ENCODE measurements at regions of chr2 and their contacts with region 1.

Region 1: GRCh38 chr2:27322766-27323595 is at the start of gene MPV17:
- DNase-seq: peak; percentile 82 to 89 (median 82)
- H3K4me3 ChIP-seq: peak within 1 kb of the TSS; percentile 81 to 97
- H3K4me3 Mint-ChIP-seq: peak within 1 kb of the TSS; percentile 95 to 100 (median 96)
- H3K27ac ChIP-seq: peak within 1 kb of the TSS; percentile 95
- H3K27ac Mint-ChIP-seq: peak within 1 kb of the TSS; percentile 96 to 100 (median 98)
- H3K4me1 ChIP-seq: peaks cover 25% of the 10 kb centered on the region
- H3K4me1 Mint-ChIP-seq: peaks cover 12 to 28% (median 18%) of the 10 kb centered on the region in 4 donors
- H3K27me3 ChIP-seq: no peaks in the 10 kb centered on the region
- H3K27me3 Mint-ChIP-seq: no peaks in the 10 kb centered on the region
- total RNA-seq, gene MPV17: 89.3 to 93.3 TPM

Region 2: DNA sequence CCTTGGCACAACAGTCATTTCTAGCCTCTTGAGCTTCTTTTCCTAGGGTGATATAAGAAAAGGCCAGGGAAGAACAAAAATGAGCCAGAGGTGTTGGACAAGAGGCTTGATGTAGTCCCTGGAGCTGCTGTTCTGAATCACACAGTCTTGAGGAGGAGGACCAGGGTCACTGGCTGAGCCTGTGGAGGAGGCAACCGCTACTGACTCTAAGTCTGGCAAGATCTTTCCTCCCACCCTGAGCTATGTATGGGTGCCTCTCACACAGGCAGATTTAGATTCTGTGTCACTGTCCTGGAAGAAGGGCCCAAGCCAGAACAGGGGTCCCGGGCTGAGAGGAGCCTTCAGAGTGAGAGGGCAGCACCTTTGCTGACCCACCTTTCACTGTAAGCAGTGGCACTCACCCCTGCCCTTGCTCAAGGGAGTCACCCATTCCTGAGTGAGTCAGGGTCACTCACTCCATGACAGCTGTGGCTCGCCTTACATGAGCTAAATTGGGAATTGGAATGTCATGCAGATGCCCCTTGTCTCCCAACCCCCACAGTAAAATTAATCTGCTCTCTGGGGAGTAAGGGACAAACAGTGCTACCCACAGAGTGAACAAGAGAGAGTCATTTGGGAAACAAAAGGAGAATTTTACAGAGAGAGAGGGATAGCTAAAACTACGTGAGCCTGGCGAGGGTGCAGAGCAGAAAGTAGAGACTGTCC is 41.0 kb before region 1 on chr2 and contains the start of gene TRIM54:
- CTCF ChIA-PET with region 1: no interaction called
- POLR2A ChIA-PET with region 1: no interaction called
- intact Hi-C with region 1: no loop called
- DNase-seq: no peak
- H3K4me3 ChIP-seq: no peak within 1 kb of the TSS
- H3K4me3 Mint-ChIP-seq: no peak within 1 kb of the TSS
- H3K27ac ChIP-seq: no peak within 1 kb of the TSS
- H3K27ac Mint-ChIP-seq: peak within 1 kb of the TSS in 1 of 7 donors; percentile 62
- H3K4me1 ChIP-seq: no peaks in the 10 kb centered on the region
- H3K4me1 Mint-ChIP-seq: peaks cover 0 to 4% (median 1%) of the 10 kb centered on the region in 4 donors
- H3K27me3 ChIP-seq: peaks cover 6% of the 10 kb centered on the region
- H3K27me3 Mint-ChIP-seq: peaks cover 11 to 25% of the 10 kb centered on the region in 2 donors
- total RNA-seq, gene TRIM54: 0.17 TPM in 1 of 2 experiments, not detected in the other

Region 3: GRCh38 chr2:27335311-27335710 is 12.3 kb after region 1 on chr2:
- CTCF ChIA-PET with region 1: no interaction called
- POLR2A ChIA-PET with region 1: interaction called, 14 read pairs
- intact Hi-C with region 1: no loop called
- DNase-seq: no peak
- H3K4me3 ChIP-seq: no peak overlapping the region
- H3K4me3 Mint-ChIP-seq: no peak overlapping the region
- H3K27ac ChIP-seq: no peak overlapping the region
- H3K27ac Mint-ChIP-seq: peak overlapping the region in 3 of 7 donors; percentile 33 to 56 (median 36)
- H3K4me1 ChIP-seq: no peaks in the 10 kb centered on the region
- H3K4me1 Mint-ChIP-seq: no peaks in the 10 kb centered on the region
- H3K27me3 ChIP-seq: no peaks in the 10 kb centered on the region
- H3K27me3 Mint-ChIP-seq: no peaks in the 10 kb centered on the region

Region 4: GRCh38 chr2:27356382-27357181 is 33.6 kb after region 1 on chr2 and contains the start of gene GTF3C2:
- CTCF ChIA-PET with region 1: no interaction called
- POLR2A ChIA-PET with region 1: interaction called, 19 read pairs
- intact Hi-C with region 1: loop called (anchors 1 kb)
- DNase-seq: peak; percentile 93 to 97 (median 93)
- H3K4me3 ChIP-seq: peak within 1 kb of the TSS; percentile 49 to 75
- H3K4me3 Mint-ChIP-seq: peak within 1 kb of the TSS; percentile 96 to 100 (median 98)
- H3K27ac ChIP-seq: peak within 1 kb of the TSS; percentile 85
- H3K27ac Mint-ChIP-seq: peak within 1 kb of the TSS; percentile 96 to 100 (median 99)
- H3K4me1 ChIP-seq: peaks cover 51% of the 10 kb centered on the region
- H3K4me1 Mint-ChIP-seq: peaks cover 36 to 64% (median 48%) of the 10 kb centered on the region in 4 donors
- H3K27me3 ChIP-seq: no peaks in the 10 kb centered on the region
- H3K27me3 Mint-ChIP-seq: no peaks in the 10 kb centered on the region
- total RNA-seq, gene GTF3C2: 82.9 to 90.8 TPM